CD4-positive, alpha-beta memory T cell (primary cell): ENCODE measurements at regions of chr17 and their contacts with region 1.

Region 1: GRCh38 chr17:50872710-50873424 is 6.7 kb upstream of the TOB1 start:
- DNase-seq: peak; percentile 41 to 83 (median 52)
- H3K4me3 ChIP-seq: no peak overlapping the region
- H3K4me3 Mint-ChIP-seq: peak overlapping the region in 6 of 8 donors; percentile 8 to 76 (median 46)
- H3K27ac ChIP-seq: no peak overlapping the region
- H3K27ac Mint-ChIP-seq: peak overlapping the region in 5 of 7 donors; percentile 13 to 92 (median 42)
- H3K4me1 ChIP-seq: peaks cover 53% of the 10 kb centered on the region
- H3K4me1 Mint-ChIP-seq: peaks cover 30 to 53% (median 45%) of the 10 kb centered on the region in 4 donors
- H3K27me3 ChIP-seq: no peaks in the 10 kb centered on the region
- H3K27me3 Mint-ChIP-seq: no peaks in the 10 kb centered on the region

Region 2: GRCh38 chr17:50817838-50818237 is 55.0 kb before region 1 on chr17:
- CTCF ChIA-PET with region 1: no interaction called
- POLR2A ChIA-PET with region 1: no interaction called
- intact Hi-C with region 1: no loop called
- DNase-seq: no peak
- H3K4me3 ChIP-seq: no peak overlapping the region
- H3K4me3 Mint-ChIP-seq: no peak overlapping the region
- H3K27ac ChIP-seq: no peak overlapping the region
- H3K27ac Mint-ChIP-seq: peak overlapping the region in 2 of 7 donors; percentile 1 to 40
- H3K4me1 ChIP-seq: peaks cover 6% of the 10 kb centered on the region
- H3K4me1 Mint-ChIP-seq: peaks cover 3 to 10% (median 5%) of the 10 kb centered on the region in 4 donors
- H3K27me3 ChIP-seq: no peaks in the 10 kb centered on the region
- H3K27me3 Mint-ChIP-seq: peaks cover 0 to 12% of the 10 kb centered on the region in 2 donors

Region 3: DNA sequence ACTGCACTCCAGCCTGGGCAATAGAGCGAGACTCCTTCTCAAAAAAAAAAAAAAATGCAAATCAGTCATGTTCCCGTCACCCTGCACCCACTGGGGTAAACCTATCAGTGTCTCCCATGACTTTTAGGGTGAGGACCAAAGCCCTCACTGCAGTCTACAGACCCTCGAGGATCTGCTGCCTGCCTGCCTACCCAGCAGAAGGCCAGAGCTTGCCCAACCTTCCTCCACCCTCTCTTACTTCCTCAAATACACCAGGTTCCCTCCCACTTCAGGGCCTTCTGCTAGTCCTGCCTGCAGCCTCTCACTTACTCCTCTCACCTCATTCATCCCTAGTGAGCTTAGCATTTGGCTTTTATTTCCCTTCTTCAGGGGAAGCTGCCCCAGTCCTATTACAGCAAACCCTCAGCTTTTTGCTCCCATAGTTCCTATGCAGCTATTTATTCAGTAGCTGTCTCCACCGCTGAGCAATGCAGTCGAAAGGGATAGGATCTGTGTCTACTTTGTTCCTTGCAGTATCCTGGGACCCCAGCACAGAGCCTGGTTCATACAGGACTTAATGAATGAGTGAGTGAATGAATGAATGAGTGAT is 11.1 kb after region 1 on chr17:
- CTCF ChIA-PET with region 1: interaction called, 4 read pairs
- POLR2A ChIA-PET with region 1: interaction called, 116 read pairs
- intact Hi-C with region 1: no loop called
- DNase-seq: no peak
- H3K4me3 ChIP-seq: no peak overlapping the region
- H3K4me3 Mint-ChIP-seq: peak overlapping the region in 1 of 8 donors; percentile 25
- H3K27ac ChIP-seq: no peak overlapping the region
- H3K27ac Mint-ChIP-seq: peak overlapping the region in 5 of 7 donors; percentile 14 to 88 (median 71)
- H3K4me1 ChIP-seq: peaks cover 27% of the 10 kb centered on the region
- H3K4me1 Mint-ChIP-seq: peaks cover 26 to 44% (median 31%) of the 10 kb centered on the region in 4 donors
- H3K27me3 ChIP-seq: no peaks in the 10 kb centered on the region
- H3K27me3 Mint-ChIP-seq: no peaks in the 10 kb centered on the region

Region 4: DNA sequence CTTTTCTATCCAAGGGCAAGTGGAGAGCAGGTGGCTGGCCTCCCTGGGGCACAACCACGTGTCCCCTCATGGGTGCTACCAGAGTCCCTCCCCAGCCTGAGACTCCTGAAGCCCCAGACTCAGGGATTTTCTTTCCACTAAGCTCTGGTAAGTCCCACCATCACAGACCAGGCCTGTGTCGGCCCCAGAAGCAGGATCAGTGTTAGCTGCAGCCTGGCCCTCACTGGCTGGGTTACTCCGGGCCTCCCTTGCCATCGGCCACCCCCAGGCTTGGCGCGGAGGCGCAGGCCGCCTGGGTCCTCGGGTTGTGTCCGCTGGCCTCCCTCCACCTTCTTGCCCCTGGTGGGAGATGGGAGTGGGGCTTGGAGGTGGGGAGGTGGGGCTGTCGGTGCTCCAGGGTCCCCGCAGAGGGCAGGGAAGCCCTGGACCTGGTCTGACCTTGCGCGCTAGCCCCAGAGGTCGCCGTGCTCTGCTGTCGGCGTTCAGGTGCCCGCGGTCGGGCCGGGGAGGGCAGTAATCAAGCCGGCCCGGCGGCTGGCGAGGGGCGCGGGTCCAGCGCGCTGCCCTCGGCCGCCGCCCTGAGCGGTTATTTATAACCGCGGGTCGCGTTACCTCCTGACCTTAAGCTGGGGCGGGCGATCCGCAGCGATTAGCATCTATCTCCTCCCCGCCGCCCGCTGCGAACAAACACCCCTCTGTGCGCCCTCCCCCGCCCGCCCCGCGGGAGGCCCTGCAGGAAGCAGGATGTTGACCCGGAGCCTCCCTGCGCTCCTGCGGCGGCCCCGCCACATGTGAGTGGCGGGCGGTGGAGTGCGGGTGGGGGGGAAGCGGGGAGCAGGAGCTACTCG is 71.4 kb after region 1 on chr17:
- CTCF ChIA-PET with region 1: interaction called, 29 read pairs
- POLR2A ChIA-PET with region 1: interaction called, 673 read pairs
- intact Hi-C with region 1: no loop called
- DNase-seq: peak; percentile 73 to 82 (median 76)
- H3K4me3 ChIP-seq: peak overlapping the region; percentile 46 to 49
- H3K4me3 Mint-ChIP-seq: peak overlapping the region; percentile 79 to 88 (median 84)
- H3K27ac ChIP-seq: peak overlapping the region; percentile 73
- H3K27ac Mint-ChIP-seq: peak overlapping the region; percentile 87 to 94 (median 93)
- H3K4me1 ChIP-seq: peaks cover 40% of the 10 kb centered on the region
- H3K4me1 Mint-ChIP-seq: peaks cover 21 to 52% (median 36%) of the 10 kb centered on the region in 4 donors
- H3K27me3 ChIP-seq: no peaks in the 10 kb centered on the region
- H3K27me3 Mint-ChIP-seq: no peaks in the 10 kb centered on the region

Region 5: GRCh38 chr17:51097708-51098446 is 225.0 kb after region 1 on chr17:
- CTCF ChIA-PET with region 1: no interaction called
- POLR2A ChIA-PET with region 1: no interaction called
- intact Hi-C with region 1: no loop called
- DNase-seq: no peak
- H3K4me3 ChIP-seq: no peak overlapping the region
- H3K4me3 Mint-ChIP-seq: peak overlapping the region in 1 of 8 donors; percentile 2
- H3K27ac ChIP-seq: no peak overlapping the region
- H3K27ac Mint-ChIP-seq: peak overlapping the region in 1 of 7 donors; percentile 47
- H3K4me1 ChIP-seq: peaks cover 40% of the 10 kb centered on the region
- H3K4me1 Mint-ChIP-seq: peaks cover 20 to 38% (median 31%) of the 10 kb centered on the region in 4 donors
- H3K27me3 ChIP-seq: no peaks in the 10 kb centered on the region
- H3K27me3 Mint-ChIP-seq: no peaks in the 10 kb centered on the region

Region 6: DNA sequence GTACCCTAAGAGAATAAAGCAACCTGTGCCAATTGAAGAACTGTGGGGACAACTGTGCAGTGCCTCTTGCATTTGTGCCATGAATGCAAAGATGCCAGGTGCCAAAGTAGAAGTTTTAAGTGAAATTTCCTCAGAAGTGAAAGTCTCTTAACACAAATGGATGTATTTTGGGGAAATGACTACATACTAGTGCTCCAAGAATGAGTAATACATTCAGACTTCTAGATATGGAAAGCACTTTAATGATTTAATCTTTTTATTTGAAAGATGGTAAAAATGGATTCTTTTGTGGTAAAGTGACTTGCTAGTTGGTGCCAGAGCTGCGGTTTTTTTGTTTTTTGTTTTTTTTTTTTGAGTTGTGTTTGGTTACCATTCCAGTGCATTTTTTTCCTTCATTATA is 402.5 kb after region 1 on chr17:
- CTCF ChIA-PET with region 1: no interaction called
- POLR2A ChIA-PET with region 1: no interaction called
- intact Hi-C with region 1: no loop called
- DNase-seq: no peak
- H3K4me3 ChIP-seq: no peak overlapping the region
- H3K4me3 Mint-ChIP-seq: no peak overlapping the region
- H3K27ac ChIP-seq: no peak overlapping the region
- H3K27ac Mint-ChIP-seq: no peak overlapping the region
- H3K4me1 ChIP-seq: peaks cover 5% of the 10 kb centered on the region
- H3K4me1 Mint-ChIP-seq: peaks cover 16 to 32% (median 26%) of the 10 kb centered on the region in 4 donors
- H3K27me3 ChIP-seq: no peaks in the 10 kb centered on the region
- H3K27me3 Mint-ChIP-seq: no peaks in the 10 kb centered on the region